Posterior vena cava (tissue), 2 donors: ENCODE measurements at regions of chr2 and their contacts with region 1.

Region 1: GRCh38 chr2:66445925-66446860 is 11.3 kb downstream of the MEIS1 start:
- DNase-seq: peak; percentile 87

Region 2: DNA sequence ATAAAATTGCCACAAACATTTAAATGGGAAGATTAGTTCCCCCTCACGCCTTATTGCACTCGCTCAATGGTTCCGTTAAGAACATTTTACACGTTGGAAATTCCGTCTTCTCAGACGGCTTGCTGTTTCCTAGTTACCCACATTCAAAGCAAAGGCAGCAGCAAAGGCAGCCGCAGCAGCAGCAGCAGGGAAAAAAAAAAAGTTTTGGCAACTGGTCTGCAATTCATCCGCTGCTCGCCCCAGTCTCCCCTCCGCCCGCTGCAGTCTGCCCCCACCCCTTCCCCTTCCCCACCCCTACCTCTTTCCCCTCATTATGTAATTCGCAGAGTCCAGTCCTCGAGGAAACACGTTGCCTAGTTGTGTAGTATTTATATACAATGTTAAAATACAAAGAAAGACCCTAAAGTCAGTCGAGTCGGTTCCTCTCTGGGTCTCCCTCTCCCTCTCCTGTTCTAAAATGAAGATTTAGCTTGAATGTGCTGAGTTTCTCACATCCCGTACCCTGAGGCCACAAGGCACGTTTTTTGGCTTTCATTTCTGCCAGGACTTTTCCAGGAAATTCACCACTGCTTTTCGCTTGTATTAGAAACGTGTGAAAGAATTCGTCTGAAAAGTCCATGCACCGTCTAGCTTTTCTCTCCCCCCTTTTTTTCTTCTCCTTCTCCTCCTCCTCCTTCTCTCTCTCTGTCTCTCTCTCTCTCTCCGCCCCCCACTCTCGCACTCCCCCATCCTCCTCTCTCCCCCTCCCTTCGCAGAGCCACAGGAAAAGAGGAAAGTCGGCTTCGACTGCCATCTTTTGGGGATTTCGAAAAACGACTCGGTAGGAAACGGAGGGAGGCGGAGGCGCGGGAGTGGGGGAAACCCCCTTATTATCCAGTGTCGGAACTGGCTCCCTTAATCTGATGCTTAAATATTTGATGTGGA is 128.8 kb after region 1 on chr2:
- intact Hi-C with region 1: loop called in 1 of 2 experiments (anchors 2 kb)
- DNase-seq: peak; percentile 89

Region 3: DNA sequence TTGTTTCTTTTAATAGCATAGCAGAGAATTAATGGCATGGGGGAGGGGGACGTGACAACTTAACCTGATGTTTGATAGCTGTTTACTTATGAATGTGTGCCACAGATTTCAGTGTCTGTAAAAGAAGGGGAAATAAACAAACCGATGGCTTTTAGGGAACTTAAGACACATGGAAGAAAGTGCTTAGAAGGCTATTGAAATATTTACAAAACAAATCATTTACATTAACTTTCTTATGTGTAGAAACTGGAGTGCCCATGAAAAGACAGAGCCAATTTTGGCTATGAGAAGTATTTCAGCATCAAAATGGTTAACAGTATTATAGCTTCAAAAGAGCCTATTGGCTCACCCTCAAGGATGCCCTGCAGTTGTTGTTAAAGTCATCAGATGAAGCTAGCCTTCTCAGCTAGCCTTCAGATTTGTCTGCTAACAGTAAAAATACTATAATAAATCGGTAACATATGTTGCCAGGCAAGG is 244.9 kb after region 1 on chr2:
- intact Hi-C with region 1: loop called (anchors 2 to 5 kb)
- DNase-seq: no peak